GM13976 (cell line): ENCODE measurements at regions of chr6 and their contacts with region 1.

Region 1: GRCh38 chr6:158220786-158221442 is 52.8 kb downstream of the GTF2H5 start:
- DNase-seq: peak; percentile 85
- CTCF ChIP-seq: peak; percentile 95

Region 2: DNA sequence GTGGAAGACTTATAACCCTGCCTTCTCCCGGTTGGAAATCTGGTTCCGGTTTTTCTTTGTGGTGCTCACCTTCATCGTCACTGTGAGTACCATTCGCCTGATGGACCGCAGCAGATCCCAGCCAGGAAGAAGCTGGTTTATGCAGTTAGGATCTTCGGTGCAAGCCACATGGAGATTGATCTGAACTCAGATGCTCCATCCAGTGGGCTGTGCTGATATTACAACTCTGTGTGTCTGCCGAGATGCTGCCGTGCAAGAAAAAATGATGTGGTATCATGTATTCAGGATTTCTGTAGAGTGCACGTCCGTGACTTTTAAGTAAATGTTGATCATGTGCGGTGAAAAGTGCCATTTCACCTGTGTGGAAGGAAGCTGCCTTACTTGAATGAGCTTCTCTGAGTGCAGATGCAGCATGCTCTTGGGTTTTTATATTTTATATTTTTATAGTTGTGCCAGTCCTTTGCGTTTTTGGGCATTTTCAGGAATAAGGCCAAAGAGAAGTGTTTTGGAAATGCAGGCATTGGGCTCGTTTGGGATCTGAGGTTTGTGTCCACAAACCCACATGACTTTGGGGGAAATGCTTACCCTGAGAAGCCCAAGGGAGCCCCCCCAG is 384.5 kb after region 1 on chr6:
- in situ Hi-C with region 1: loop called (anchors 10 kb)
- DNase-seq: peak; percentile 78
- CTCF ChIP-seq: peak; percentile 65